SK-N-SH (cell line): ENCODE measurements at regions of chr22 and their contacts with region 1.

Region 1: GRCh38 chr22:21938071-21938822 is 14.4 kb downstream of the PPM1F start:
- DNase-seq: peak; percentile 96
- H3K4me3 ChIP-seq: peak overlapping the region; percentile 51 to 52
- H3K27ac ChIP-seq: peak overlapping the region; percentile 89 to 95
- H3K4me1 ChIP-seq: peaks cover 23 to 39% of the 10 kb centered on the region in 2 experiments; a peak in 3 of 4 replicates
- H3K27me3 ChIP-seq: no peaks in the 10 kb centered on the region
- CTCF ChIP-seq: peak; percentile 84
- EP300 ChIP-seq: no peak
- RAD21 ChIP-seq: peak; percentile 88

Region 2: DNA sequence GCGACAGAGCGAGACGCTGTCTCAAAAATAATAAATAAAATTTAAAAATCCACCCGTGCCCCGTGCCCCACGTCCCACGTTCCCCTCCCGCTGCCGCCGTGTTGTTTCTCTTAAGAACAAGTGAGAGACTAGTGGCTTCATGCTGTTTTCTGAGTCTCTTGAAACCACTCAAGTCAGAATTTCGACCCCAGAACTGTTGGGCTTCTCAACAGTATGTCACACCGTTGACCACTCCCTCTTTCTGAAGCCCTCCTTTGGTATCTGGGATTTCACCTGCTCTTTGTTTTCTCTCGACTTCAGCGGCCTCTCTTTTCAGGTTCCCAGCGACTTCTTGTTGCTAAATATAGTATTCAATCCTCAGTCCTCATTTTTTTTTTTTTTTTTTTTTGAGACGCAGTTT is 271.5 kb before region 1 on chr22:
- CTCF ChIA-PET with region 1: interaction called, 13 read pairs
- POLR2A ChIA-PET with region 1: no interaction called
- DNase-seq: no peak
- H3K4me3 ChIP-seq: peak overlapping the region; percentile 72 to 98
- H3K27ac ChIP-seq: peak overlapping the region in 1 of 2 experiments; percentile 86; a peak in 1 of 4 replicates
- H3K4me1 ChIP-seq: peaks cover 0 to 2% of the 10 kb centered on the region in 2 experiments; a peak in 1 of 4 replicates
- H3K27me3 ChIP-seq: no peaks in the 10 kb centered on the region
- CTCF ChIP-seq: no peak
- EP300 ChIP-seq: no peak
- RAD21 ChIP-seq: no peak

Region 3: DNA sequence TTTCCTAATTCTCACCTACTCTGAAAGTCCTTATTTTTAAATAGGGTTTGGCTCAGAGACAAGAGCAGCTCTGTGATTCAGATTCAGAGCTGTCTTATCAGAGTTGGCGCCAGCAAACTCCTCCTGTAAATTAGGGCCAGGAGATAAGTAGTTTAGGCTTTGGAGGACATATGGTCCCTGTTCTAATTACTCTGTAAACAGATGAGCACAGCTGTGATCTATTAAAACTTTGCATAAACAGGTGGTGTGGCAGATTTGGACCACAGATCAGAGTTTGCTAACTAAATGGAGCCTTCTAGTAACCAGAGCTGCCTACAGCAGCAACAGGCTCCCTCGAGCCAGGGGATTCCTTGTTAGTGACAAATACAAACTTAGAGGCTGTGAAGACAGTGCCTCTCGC is 230.6 kb before region 1 on chr22:
- CTCF ChIA-PET with region 1: interaction called, 90 read pairs
- POLR2A ChIA-PET with region 1: no interaction called
- DNase-seq: peak; percentile 54
- H3K4me3 ChIP-seq: no peak overlapping the region
- H3K27ac ChIP-seq: peak overlapping the region in 1 of 2 experiments; percentile 54; a peak in 2 of 4 replicates
- H3K4me1 ChIP-seq: peaks cover 0 to 11% of the 10 kb centered on the region in 2 experiments; a peak in 1 of 4 replicates
- H3K27me3 ChIP-seq: no peaks in the 10 kb centered on the region
- CTCF ChIP-seq: no peak
- EP300 ChIP-seq: peak in 1 of 2 experiments; percentile 60; a peak in 1 of 4 replicates
- RAD21 ChIP-seq: no peak

Region 4: DNA sequence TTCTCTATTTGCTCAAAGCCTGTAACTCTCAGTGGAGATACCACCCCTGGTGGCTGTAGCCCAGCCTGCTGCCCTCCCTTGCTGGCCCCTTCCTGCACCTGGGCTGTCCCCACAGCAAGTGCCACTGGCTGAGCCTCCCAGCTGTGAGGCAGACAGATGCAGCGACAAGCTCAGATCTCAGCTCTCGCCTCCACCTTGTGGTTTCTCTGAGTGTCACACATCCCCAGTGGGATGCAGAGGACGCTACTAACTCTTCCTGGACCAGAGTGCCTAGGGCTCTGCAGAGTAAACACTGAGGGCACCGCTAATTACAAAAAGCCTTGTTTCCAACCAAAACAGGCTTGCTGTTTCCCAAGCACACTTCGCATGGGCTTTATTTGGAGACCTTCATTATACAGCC is 211.6 kb before region 1 on chr22:
- CTCF ChIA-PET with region 1: interaction called, 12 read pairs
- POLR2A ChIA-PET with region 1: interaction called, 3 read pairs
- DNase-seq: peak; percentile 57
- H3K4me3 ChIP-seq: no peak overlapping the region
- H3K27ac ChIP-seq: no peak overlapping the region
- H3K4me1 ChIP-seq: no peaks in the 10 kb centered on the region; a peak in 1 of 4 replicates
- H3K27me3 ChIP-seq: no peaks in the 10 kb centered on the region
- CTCF ChIP-seq: no peak; the same call in 1 of the 2 replicates
- EP300 ChIP-seq: no peak
- RAD21 ChIP-seq: peak; percentile 54

Region 5: DNA sequence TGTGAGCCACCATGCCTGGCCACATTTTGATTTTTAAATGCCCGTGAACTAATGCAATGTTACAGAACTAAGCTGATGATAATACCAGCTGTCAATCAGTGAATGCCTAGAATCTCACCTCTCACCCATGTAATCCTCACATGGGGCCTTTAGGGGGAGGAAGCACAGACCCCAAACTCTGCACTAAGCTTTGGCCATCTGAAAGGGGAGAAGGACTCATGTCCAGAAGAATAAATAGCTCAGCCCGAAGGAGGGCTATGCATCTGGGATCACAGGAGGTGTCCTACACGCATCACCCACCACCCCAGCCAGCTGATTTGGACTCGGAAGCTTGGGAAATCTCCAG is 166.6 kb before region 1 on chr22:
- CTCF ChIA-PET with region 1: interaction called, 15 read pairs
- POLR2A ChIA-PET with region 1: no interaction called
- DNase-seq: no peak
- H3K4me3 ChIP-seq: no peak overlapping the region
- H3K27ac ChIP-seq: no peak overlapping the region
- H3K4me1 ChIP-seq: no peaks in the 10 kb centered on the region
- H3K27me3 ChIP-seq: no peaks in the 10 kb centered on the region
- CTCF ChIP-seq: no peak
- EP300 ChIP-seq: no peak
- RAD21 ChIP-seq: no peak

Region 6: DNA sequence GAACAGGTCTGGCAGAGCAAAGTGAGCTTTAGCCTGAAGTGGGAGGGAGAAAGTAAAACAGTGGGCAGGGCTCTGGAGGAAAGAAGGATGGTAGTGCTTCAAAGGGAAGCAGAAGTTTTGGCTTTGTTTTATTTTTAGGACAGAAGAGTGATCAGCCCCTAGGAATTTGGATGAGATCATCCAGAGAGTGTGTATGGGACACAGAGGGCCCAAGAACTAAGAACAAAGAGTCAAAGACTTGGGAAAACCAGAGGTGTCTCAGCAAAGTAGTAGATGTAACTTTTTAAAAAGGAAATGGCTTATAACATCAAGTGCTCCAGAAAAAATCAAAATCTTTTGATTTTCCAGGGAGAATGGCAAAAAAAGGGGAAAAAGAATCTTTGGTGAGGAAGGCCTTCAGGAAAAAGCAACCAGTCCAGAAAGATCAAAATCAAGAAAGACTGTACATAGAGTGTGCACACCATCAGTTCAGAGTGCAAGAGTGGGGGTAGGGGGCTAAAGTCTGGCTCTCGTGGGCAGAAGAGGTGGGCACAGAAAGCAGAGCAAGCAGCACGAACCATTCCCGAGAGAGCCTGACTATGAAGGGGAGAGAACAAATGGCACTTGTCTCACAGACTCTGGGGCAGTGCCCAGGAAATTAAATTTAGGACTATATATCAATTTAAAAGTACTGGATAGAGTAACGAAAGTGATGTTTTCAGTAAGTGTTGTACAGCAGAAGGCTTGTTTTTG is 100.8 kb before region 1 on chr22:
- CTCF ChIA-PET with region 1: no interaction called
- POLR2A ChIA-PET with region 1: no interaction called
- DNase-seq: no peak
- H3K4me3 ChIP-seq: peak overlapping the region in 1 of 2 experiments; percentile 13; a peak in 1 of 4 replicates
- H3K27ac ChIP-seq: peak overlapping the region; percentile 67 to 99
- H3K4me1 ChIP-seq: peaks cover 5 to 13% of the 10 kb centered on the region in 2 experiments; a peak in 1 of 4 replicates
- H3K27me3 ChIP-seq: no peaks in the 10 kb centered on the region
- CTCF ChIP-seq: no peak
- EP300 ChIP-seq: no peak
- RAD21 ChIP-seq: no peak

Region 7: GRCh38 chr22:21917181-21917958 is 20.9 kb before region 1 on chr22:
- CTCF ChIA-PET with region 1: interaction called, 145 read pairs
- POLR2A ChIA-PET with region 1: interaction called, 5 read pairs
- DNase-seq: peak; percentile 44
- H3K4me3 ChIP-seq: no peak overlapping the region
- H3K27ac ChIP-seq: no peak overlapping the region
- H3K4me1 ChIP-seq: peaks cover 0 to 16% of the 10 kb centered on the region in 2 experiments; a peak in 1 of 4 replicates
- H3K27me3 ChIP-seq: no peaks in the 10 kb centered on the region
- CTCF ChIP-seq: no peak
- EP300 ChIP-seq: no peak
- RAD21 ChIP-seq: no peak

Region 8: GRCh38 chr22:21972293-21972779 is 34.1 kb after region 1 on chr22:
- CTCF ChIA-PET with region 1: interaction called, 18 read pairs
- POLR2A ChIA-PET with region 1: no interaction called
- DNase-seq: peak; percentile 88
- H3K4me3 ChIP-seq: peak overlapping the region in 1 of 2 experiments; percentile 42; a peak in 1 of 4 replicates
- H3K27ac ChIP-seq: no peak overlapping the region
- H3K4me1 ChIP-seq: no peaks in the 10 kb centered on the region
- H3K27me3 ChIP-seq: no peaks in the 10 kb centered on the region
- CTCF ChIP-seq: peak; percentile 92
- EP300 ChIP-seq: no peak
- RAD21 ChIP-seq: peak; percentile 45

Region 9: GRCh38 chr22:22380098-22381030 is 442.1 kb after region 1 on chr22:
- CTCF ChIA-PET with region 1: no interaction called
- POLR2A ChIA-PET with region 1: no interaction called
- DNase-seq: peak; percentile 35
- H3K4me3 ChIP-seq: no peak overlapping the region
- H3K27ac ChIP-seq: no peak overlapping the region
- H3K4me1 ChIP-seq: no peaks in the 10 kb centered on the region
- H3K27me3 ChIP-seq: peaks cover 4% of the 10 kb centered on the region
- CTCF ChIP-seq: peak; percentile 18; the same call in 1 of the 2 replicates
- EP300 ChIP-seq: no peak
- RAD21 ChIP-seq: no peak